AG04449 (cell line): ENCODE measurements at regions of chr9 and their contacts with region 1.

Region 1: DNA sequence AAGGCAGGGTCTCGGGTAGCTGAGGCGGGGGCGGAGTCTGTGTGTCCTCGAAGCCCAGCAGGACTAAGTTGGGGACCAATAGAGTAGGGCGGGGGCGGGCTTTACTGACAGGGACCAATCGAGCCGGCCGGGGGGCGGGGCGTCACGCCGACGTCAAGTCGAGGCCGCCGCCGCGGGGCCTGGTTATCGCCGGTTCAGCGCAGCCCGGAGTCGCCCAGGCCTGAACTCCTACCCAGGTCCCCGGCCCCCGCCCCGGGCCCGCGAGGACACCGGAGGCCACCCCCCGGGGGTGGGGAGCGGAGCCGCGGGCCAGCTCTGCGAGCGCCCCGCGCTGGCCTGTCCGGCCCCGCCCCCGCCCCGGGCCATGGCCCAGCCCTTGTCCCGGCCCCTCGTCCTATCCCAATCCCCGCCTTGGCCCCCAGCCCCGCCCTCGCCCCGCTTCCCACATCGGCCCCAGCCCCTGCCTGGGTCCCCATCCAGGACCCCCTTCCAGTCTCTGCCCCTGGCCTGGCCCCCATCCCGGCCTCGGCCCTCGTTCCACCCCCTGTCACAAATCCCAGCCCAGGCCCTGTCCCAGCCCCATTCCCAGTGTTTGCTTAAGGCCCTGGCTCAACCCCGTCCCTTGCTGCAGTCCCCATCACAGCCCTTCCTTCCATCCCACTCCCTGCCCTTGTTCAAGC is at the start of gene TMEM8B:
- DNase-seq: no peak
- H3K4me3 ChIP-seq: peak within 1 kb of the TSS; percentile 69
- CTCF ChIP-seq: no peak

Region 2: DNA sequence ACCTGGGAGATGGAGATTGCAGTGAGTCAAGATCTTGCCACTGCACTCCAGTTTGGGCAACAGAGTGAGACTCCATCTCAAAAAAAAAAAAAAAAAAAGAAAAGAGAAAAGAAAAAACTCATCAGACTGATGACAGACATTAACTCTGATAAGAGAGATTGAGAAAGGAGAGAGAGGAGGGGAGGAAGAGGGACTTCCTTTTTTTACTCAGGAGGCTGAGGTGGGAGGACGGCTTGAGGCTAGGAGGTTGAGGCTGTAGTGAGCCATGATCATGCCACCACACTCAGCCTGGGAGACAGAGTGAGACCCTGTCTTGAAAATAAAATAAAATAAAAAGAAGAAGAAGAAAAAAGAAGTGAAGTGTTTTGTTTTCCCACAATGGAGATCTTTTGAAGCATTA is 65.4 kb before region 1 on chr9:
- CTCF ChIA-PET with region 1: no interaction called
- POLR2A ChIA-PET with region 1: no interaction called
- DNase-seq: no peak
- H3K4me3 ChIP-seq: no peak overlapping the region
- CTCF ChIP-seq: no peak

Region 3: GRCh38 chr9:35798658-35799374 is 30.4 kb before region 1 on chr9:
- CTCF ChIA-PET with region 1: interaction called, 163 read pairs
- POLR2A ChIA-PET with region 1: no interaction called
- DNase-seq: no peak
- H3K4me3 ChIP-seq: no peak overlapping the region
- CTCF ChIP-seq: no peak

Region 4: GRCh38 chr9:35844716-35845270 is 15.6 kb after region 1 on chr9:
- CTCF ChIA-PET with region 1: interaction called, 106 read pairs
- POLR2A ChIA-PET with region 1: no interaction called
- DNase-seq: no peak
- H3K4me3 ChIP-seq: no peak overlapping the region
- CTCF ChIP-seq: no peak

Region 5: GRCh38 chr9:35903049-35903448 is 73.8 kb after region 1 on chr9:
- CTCF ChIA-PET with region 1: interaction called, 19 read pairs
- POLR2A ChIA-PET with region 1: no interaction called
- DNase-seq: no peak
- H3K4me3 ChIP-seq: no peak overlapping the region
- CTCF ChIP-seq: peak; percentile 46

Region 6: DNA sequence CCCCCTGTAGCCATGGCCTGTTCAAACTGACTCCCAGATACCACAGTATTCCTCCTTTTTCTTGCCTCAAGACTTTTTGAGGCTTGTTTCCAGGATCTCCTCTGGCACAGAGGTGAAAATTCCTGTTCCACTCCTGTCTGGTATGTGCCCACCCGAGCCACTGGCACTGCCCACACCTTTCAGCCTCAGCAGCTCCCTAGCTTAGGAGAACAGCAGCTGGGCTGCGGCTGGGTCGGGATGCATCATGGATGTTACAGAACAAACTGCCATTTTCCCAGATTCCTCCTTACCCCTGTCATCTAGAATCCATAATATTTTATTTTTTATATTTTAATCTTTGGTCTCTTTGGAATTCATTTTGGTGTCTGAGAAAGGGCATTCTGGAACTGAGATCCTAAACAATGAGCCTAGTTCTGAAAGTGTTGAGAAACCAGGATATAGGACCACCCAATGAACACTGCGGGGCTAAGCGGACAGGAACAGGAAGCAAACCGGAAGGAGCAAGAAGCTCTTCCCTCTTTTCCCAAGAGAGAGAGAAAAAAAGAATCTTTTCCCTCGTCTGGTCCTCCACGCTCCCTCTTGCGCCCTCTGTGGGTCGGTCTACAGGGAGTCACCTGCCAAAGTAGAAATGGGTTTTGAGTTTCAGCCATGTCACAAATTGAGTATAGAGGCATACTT is 116.3 kb after region 1 on chr9:
- CTCF ChIA-PET with region 1: interaction called, 36 read pairs
- POLR2A ChIA-PET with region 1: no interaction called
- DNase-seq: no peak
- H3K4me3 ChIP-seq: no peak overlapping the region
- CTCF ChIP-seq: peak; percentile 86